ENCODE measurements at regions of chr13 and their contacts with region 1.

Region 1: GRCh38 chr13:77026818-77027585 is at the start of gene FBXL3:
- DNase-seq: peak; percentile 88
- H3K4me3 Mint-ChIP-seq: peak within 1 kb of the TSS; percentile 95
- H3K27ac Mint-ChIP-seq: peak within 1 kb of the TSS; percentile 98
- H3K4me1 Mint-ChIP-seq: peaks cover 48% of the 10 kb centered on the region
- H3K27me3 Mint-ChIP-seq: peaks cover 2% of the 10 kb centered on the region
- total RNA-seq, gene FBXL3: 38.6 to 43.3 TPM

Region 2: DNA sequence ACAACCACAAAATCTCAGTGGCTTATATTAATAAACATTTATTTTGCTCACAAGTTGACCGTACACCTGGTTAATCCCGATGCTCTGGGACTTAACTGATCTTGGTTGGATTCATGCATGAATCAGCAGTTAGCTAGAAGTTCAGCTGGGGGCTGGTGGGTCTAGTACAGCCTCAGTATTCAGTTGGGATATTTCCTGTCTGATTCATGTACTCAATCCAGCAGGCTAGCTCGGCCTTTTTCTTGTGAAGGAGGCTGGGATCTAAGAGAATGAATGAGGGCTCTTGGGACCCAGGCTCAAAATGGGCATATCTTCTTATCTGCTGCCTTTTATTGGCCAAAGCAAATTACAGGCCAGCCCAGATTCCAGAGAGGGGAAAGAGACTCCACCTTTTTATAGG is 319.6 kb before region 1 on chr13:
- CTCF ChIA-PET with region 1: no interaction called
- POLR2A ChIA-PET with region 1: no interaction called
- DNase-seq: no peak
- H3K4me3 Mint-ChIP-seq: no peak overlapping the region
- H3K27ac Mint-ChIP-seq: no peak overlapping the region
- H3K4me1 Mint-ChIP-seq: no peaks in the 10 kb centered on the region
- H3K27me3 Mint-ChIP-seq: peaks cover 2% of the 10 kb centered on the region

Region 3: GRCh38 chr13:76991796-76992547 is 35.0 kb before region 1 on chr13 and contains the start of gene CLN5:
- CTCF ChIA-PET with region 1: interaction called, 28 read pairs
- POLR2A ChIA-PET with region 1: interaction called, 162 read pairs
- DNase-seq: peak; percentile 96
- H3K4me3 Mint-ChIP-seq: peak within 1 kb of the TSS; percentile 96
- H3K27ac Mint-ChIP-seq: peak within 1 kb of the TSS; percentile 100
- H3K4me1 Mint-ChIP-seq: peaks cover 37% of the 10 kb centered on the region
- H3K27me3 Mint-ChIP-seq: peaks cover 21% of the 10 kb centered on the region
- total RNA-seq, gene CLN5: 13.0 to 15.6 TPM

Region 4: DNA sequence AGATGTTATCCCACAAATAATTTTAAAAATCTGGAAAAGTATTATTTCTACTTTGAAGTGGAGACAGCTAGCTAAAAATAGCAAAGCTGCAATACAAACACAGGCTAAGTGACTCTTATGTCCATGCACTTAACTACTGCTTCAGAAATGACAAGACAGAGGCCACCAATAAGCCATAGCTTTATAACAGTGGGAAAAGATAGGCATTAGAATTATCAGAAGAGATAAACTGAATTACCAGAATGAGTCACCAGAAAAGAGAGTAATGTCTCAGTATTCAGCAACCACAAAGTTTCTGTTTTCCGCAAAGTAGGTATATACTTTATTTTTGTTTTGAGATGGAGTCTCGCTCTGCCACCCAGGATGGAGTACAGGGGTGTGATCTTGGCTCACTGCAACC is 18.0 kb before region 1 on chr13:
- CTCF ChIA-PET with region 1: interaction called, 9 read pairs
- POLR2A ChIA-PET with region 1: interaction called, 62 read pairs
- DNase-seq: no peak
- H3K4me3 Mint-ChIP-seq: no peak overlapping the region
- H3K27ac Mint-ChIP-seq: no peak overlapping the region
- H3K4me1 Mint-ChIP-seq: peaks cover 27% of the 10 kb centered on the region
- H3K27me3 Mint-ChIP-seq: no peaks in the 10 kb centered on the region

Region 5: GRCh38 chr13:77329133-77329910 is 302.3 kb after region 1 on chr13:
- CTCF ChIA-PET with region 1: interaction called, 9 read pairs
- POLR2A ChIA-PET with region 1: interaction called, 129 read pairs
- DNase-seq: peak; percentile 95
- H3K4me3 Mint-ChIP-seq: peak overlapping the region; percentile 95
- H3K27ac Mint-ChIP-seq: peak overlapping the region; percentile 99
- H3K4me1 Mint-ChIP-seq: peaks cover 40% of the 10 kb centered on the region
- H3K27me3 Mint-ChIP-seq: no peaks in the 10 kb centered on the region